ENCODE measurements at regions of chr5 and their contacts with region 1.

Region 1: DNA sequence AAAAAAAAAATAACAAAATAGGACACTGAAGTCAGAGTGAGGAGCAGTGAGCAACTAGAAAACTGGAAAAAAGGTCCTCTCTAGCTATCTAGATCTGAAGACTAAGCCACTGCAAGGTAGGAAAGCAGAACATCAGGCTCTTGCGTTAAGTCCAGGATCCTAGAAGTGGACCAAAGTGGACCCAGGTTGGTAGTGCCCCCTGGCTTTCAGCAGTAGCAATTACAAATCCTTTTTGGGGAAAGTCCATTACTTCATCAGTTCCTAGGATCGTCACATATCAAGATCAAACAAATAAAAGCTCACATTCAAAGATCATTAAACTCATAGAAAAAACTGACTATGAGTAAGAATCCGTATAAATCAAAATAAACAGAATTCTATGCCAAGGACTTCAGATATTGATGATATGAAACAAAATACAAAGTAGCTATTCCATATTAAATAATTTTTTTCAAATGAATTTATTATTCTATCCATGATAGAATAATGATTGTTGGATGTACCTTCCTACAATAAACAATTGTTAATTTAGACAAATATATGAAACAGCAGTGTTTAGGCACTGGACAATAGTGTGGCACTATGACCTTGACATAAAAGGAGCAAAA is 6.5 kb upstream of the RICTOR start:
- DNase-seq: peak; percentile 39
- ATAC-seq: peak; percentile 71
- H3K4me3 Mint-ChIP-seq: no peak overlapping the region
- H3K27ac Mint-ChIP-seq: no peak overlapping the region
- H3K4me1 Mint-ChIP-seq: peaks cover 17% of the 10 kb centered on the region
- H3K27me3 Mint-ChIP-seq: peaks cover 33% of the 10 kb centered on the region
- CTCF ChIP-seq: peak; percentile 89

Region 2: DNA sequence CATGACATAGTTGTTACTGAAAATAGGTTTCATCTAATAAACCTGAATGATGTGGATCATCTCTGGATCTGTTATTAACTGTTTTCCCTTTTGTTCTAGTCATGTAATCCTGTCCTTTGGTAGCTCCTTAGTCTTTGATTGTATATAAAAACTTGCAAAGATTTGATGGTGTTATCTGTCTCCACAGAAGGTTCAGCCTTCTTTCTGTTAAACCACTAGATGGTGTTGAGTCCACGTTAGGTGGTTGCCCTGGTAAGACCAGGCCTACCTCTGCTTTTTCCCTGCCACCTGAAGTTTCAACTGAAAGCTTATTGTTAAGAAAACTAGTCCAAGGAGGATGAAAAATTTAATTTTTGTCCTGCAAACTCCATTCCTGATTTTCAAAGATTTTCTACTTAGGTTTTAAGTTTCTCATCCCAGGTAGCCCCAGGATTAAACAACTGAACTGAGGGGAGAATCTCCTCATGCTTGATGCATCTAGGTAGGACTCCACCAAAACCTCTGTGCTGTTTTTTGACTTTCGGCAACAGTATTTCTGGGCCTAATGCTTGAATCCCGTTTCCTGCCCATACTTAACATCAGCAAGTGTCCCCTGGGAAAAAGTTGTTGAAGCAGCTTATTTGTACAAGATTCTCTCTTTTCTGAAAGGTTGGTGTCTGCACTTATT is 75.0 kb before region 1 on chr5:
- CTCF ChIA-PET with region 1: interaction called, 21 read pairs
- POLR2A ChIA-PET with region 1: no interaction called
- intact Hi-C with region 1: no loop called
- DNase-seq: no peak
- ATAC-seq: peak; percentile 71
- H3K4me3 Mint-ChIP-seq: no peak overlapping the region
- H3K27ac Mint-ChIP-seq: peak overlapping the region; percentile 28
- H3K4me1 Mint-ChIP-seq: peaks cover 44% of the 10 kb centered on the region
- H3K27me3 Mint-ChIP-seq: no peaks in the 10 kb centered on the region
- CTCF ChIP-seq: no peak

Region 3: DNA sequence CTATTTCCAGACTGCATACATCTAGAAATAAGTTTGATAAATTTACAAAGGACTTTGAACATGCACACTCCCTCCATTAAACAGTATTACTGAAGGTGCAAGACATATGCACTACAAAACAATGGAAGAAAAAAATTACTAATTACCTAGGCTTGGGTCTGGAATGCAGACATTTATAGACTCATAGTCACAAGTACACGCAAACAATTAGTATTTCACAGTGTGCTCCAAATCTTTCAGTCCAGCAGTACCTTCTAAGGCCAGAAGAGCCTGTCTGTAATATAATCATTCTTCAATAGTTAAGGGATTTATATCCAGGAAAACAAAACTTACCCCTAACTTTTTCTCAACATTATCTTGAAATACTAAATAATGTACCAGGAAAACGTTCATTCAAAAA is 17.7 kb before region 1 on chr5:
- CTCF ChIA-PET with region 1: interaction called, 12 read pairs
- POLR2A ChIA-PET with region 1: no interaction called
- intact Hi-C with region 1: no loop called
- DNase-seq: no peak
- ATAC-seq: no peak
- H3K4me3 Mint-ChIP-seq: no peak overlapping the region
- H3K27ac Mint-ChIP-seq: peak overlapping the region; percentile 24
- H3K4me1 Mint-ChIP-seq: peaks cover 66% of the 10 kb centered on the region
- H3K27me3 Mint-ChIP-seq: no peaks in the 10 kb centered on the region
- CTCF ChIP-seq: no peak

Region 4: GRCh38 chr5:39100851-39101396 is 20.2 kb after region 1 on chr5:
- CTCF ChIA-PET with region 1: interaction called, 22 read pairs
- POLR2A ChIA-PET with region 1: no interaction called
- intact Hi-C with region 1: no loop called
- DNase-seq: no peak
- ATAC-seq: no peak
- H3K4me3 Mint-ChIP-seq: no peak overlapping the region
- H3K27ac Mint-ChIP-seq: peak overlapping the region; percentile 14
- H3K4me1 Mint-ChIP-seq: peaks cover 27% of the 10 kb centered on the region
- H3K27me3 Mint-ChIP-seq: no peaks in the 10 kb centered on the region
- CTCF ChIP-seq: no peak

Region 5: GRCh38 chr5:39119404-39120051 is 38.8 kb after region 1 on chr5:
- CTCF ChIA-PET with region 1: interaction called, 17 read pairs
- POLR2A ChIA-PET with region 1: no interaction called
- intact Hi-C with region 1: no loop called
- DNase-seq: no peak
- ATAC-seq: no peak
- H3K4me3 Mint-ChIP-seq: no peak overlapping the region
- H3K27ac Mint-ChIP-seq: peak overlapping the region; percentile 30
- H3K4me1 Mint-ChIP-seq: peaks cover 55% of the 10 kb centered on the region
- H3K27me3 Mint-ChIP-seq: no peaks in the 10 kb centered on the region
- CTCF ChIP-seq: no peak

Measured in activated CD8-positive, alpha-beta T cell treated with anti-CD3 and anti-CD28 coated beads for 36 hours (primary cell).